ENCODE measurements at regions of chr1 and their contacts with region 1.

Region 1: DNA sequence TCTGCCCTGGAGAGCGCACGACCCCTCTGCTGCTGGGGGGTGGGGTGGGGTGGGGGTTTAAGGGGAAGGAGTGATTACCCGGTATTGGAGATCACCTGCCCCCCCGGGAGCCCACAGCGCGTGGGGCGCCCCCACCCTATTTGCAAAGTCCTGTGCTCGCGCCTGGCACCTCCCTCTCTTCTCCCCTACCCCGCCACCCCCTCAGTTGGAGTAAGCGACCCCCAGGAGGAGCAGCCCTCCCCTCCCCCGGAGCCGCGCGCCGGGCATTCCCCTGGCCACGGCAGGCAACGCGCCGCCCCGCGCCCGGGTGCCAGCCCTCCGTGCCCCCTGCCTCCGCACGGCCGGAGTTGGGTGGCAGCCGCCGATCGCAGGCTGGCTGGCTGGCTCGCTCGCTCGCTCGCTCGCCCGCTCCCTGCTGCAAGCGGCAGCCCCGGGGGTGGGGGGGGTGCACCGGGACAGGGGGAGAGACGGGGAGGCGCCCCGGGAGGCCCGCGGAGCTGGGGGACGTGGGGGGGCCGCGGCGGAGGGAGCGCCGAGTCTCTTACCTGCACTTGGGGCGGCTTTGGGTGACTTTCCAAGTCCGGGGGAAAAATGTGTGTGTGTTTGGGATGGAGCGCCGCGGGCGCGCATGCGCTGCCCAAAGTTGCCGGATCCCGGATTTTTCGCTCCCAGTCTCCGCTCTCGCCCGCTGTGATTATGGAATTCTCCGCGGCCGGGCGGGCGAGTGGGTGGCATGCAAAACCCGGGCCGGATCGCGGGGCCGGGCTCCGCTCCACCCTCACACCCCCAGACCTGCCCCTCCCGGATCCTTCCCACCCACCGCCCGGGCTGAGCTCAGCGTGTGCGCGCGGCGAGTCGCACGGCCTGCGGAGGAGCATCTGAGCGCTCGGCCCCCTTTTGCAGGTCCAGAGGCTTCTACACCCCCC is at the start of gene CASZ1:
- DNase-seq: no peak
- H3K4me3 ChIP-seq: peak within 1 kb of the TSS; percentile 59 to 71
- H3K27ac ChIP-seq: peak within 1 kb of the TSS; percentile 66
- H3K4me1 ChIP-seq: peaks cover 28% of the 10 kb centered on the region
- H3K27me3 ChIP-seq: peaks cover 6% of the 10 kb centered on the region
- CTCF ChIP-seq: peak in 1 of 3 experiments; percentile 3
- POLR2A ChIP-seq: peak in 1 of 2 donors; percentile 2
- total RNA-seq, gene CASZ1: 30.7 TPM

Region 2: DNA sequence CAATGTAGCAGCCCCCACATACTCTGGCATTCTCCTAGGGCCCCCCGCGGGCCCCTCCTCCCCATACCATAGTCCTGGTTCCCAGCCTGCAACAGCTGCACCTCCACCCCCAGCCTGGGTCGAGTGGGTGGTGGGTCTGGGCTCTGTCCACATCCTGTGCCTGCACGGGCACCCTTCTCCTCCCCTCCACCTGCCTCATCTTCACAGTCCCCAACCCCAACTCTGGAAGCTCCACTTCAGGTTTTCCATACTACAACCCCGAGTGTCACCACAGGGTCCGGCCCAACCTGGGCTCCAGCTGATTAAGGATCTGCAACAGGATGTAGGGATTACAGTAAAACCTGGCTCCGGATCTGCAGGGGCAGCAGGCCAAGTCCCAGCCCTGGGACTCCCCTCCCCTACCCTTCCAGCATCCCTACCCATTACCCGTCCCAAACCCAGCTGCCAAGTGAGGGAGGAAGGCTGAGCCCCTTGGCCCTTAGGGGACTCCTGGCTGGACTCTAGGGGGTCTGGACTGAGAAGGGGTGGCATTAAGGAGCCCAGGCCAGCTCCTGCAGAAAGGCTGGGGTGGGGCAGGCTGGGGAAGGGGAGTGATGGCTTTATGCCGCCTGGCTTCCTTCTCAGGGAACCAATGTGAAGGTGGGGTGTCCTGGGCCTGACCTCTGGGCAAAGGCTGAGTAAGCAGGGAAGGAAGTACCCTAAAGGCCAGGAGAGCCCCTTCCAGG is 116.6 kb before region 1 on chr1:
- intact Hi-C with region 1: loop called (anchors 10 kb)
- DNase-seq: no peak
- H3K4me3 ChIP-seq: no peak overlapping the region
- H3K27ac ChIP-seq: no peak overlapping the region
- H3K4me1 ChIP-seq: peaks cover 73% of the 10 kb centered on the region
- H3K27me3 ChIP-seq: no peaks in the 10 kb centered on the region
- CTCF ChIP-seq: no peak
- POLR2A ChIP-seq: no peak